ENCODE measurements at regions of chr18 and their contacts with region 1.

Region 1: DNA sequence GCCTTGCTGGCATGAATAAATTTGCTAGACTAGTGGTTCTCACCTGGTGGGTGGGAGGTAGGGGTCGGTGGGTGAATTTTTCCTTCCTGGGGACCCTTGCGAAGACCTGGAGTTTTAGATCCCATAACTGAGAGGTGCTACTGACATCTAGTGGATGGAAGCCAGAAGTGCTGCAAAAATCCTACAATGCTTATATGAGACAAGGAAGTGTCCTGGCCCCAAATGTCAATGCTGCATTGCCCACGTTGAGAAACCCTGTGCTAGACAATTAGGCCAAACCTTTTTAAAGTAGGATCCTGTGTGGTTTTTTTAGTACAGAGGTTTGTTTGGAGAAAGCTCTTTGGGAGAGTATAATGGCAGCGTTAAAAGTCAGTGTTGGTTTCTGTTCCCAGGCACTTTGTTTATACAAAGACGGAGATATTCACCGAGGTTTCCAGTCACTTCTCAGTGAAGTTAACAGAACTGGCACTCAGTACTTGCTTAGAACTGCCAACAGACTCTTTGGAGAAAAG is 9.6 kb downstream of the SERPINB8 start:
- DNase-seq: peak; percentile 36
- H3K4me3 Mint-ChIP-seq: no peak overlapping the region
- H3K27ac Mint-ChIP-seq: no peak overlapping the region
- H3K4me1 Mint-ChIP-seq: peaks cover 21% of the 10 kb centered on the region
- H3K27me3 Mint-ChIP-seq: no peaks in the 10 kb centered on the region

Region 2: DNA sequence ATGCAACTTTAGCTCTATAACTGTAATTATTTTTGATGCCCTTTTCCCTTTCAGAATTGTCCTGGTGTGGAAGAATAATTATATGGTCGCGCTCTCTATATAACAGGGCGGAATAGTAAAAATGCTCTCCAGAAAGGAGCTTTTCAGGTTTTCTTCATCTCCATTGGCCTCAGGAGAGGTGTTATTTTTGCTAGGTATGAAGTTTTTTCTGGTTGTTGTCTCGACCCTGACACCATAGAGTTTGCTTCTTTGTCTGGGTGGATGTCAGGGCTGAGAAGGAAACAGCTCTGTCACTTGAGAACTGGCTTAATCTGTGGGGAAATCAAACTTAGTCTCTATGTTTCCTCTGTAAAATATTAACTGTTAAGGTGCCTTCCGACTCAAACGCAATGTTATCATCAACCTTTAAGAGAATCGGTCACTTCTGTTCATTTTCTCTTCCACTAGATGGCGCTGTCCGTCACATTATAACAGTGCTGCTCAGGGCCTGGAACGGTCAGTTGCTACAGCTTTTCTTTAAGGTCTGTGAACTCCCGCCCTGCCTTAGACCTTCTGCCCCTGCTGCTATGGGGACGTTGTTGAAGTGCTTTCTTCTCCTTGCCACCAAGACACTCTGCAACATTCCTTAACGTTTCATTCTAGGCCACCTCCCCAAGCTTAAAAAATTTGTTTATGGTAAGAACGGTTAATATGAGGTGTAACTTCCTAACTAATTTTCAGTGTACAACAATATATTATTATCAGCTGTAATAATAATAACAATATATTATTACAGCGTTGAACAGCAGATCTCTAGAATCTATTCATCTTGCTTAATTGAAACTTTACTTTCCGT is 461.1 kb before region 1 on chr18:
- CTCF ChIA-PET with region 1: interaction called, 6 read pairs
- POLR2A ChIA-PET with region 1: no interaction called
- intact Hi-C with region 1: loop called (anchors 1 kb)
- DNase-seq: peak; percentile 62
- H3K4me3 Mint-ChIP-seq: no peak overlapping the region
- H3K27ac Mint-ChIP-seq: no peak overlapping the region
- H3K4me1 Mint-ChIP-seq: no peaks in the 10 kb centered on the region
- H3K27me3 Mint-ChIP-seq: peaks cover 5% of the 10 kb centered on the region

Region 3: DNA sequence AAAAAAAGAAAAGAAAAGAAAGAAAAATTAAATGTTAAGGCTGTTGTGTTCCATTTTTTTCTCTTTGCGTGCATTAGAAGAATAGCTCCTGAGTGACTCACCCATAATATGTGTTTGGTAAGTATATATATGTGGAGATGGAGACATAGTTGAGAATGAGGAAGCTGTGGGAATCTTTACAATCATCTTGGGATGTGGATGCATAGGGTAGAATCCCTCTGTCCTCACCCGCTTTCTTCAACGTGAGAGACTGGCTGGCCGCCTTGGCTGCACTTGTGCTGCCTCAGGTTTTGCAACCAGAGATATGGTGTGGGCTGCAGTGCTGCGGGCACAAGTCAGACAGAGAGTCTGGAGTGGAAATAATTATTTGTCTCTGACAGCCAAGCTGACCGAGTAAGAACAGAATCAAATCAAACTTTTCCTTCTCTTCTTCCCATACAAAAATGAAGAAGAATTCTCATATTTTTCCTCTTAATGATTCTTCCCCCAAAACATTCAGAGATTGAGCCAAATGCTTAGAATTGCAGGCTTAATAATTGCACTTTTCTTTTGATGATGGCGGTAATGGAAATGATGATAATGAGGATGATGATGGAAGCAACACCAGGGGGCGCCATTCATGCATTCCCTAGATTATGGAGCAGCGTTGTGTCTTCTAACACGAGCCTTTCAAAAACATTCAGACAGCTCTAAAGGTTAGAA is 155.8 kb before region 1 on chr18:
- CTCF ChIA-PET with region 1: interaction called, 3 read pairs
- POLR2A ChIA-PET with region 1: no interaction called
- intact Hi-C with region 1: loop called (anchors 1 kb)
- DNase-seq: peak; percentile 53
- H3K4me3 Mint-ChIP-seq: no peak overlapping the region
- H3K27ac Mint-ChIP-seq: no peak overlapping the region
- H3K4me1 Mint-ChIP-seq: no peaks in the 10 kb centered on the region
- H3K27me3 Mint-ChIP-seq: peaks cover 3% of the 10 kb centered on the region

Region 4: GRCh38 chr18:63890950-63891304 is 88.5 kb before region 1 on chr18:
- CTCF ChIA-PET with region 1: no interaction called
- POLR2A ChIA-PET with region 1: no interaction called
- intact Hi-C with region 1: loop called (anchors 1 kb)
- DNase-seq: no peak
- H3K4me3 Mint-ChIP-seq: no peak overlapping the region
- H3K27ac Mint-ChIP-seq: no peak overlapping the region
- H3K4me1 Mint-ChIP-seq: peaks cover 6% of the 10 kb centered on the region
- H3K27me3 Mint-ChIP-seq: peaks cover 14% of the 10 kb centered on the region

Region 5: DNA sequence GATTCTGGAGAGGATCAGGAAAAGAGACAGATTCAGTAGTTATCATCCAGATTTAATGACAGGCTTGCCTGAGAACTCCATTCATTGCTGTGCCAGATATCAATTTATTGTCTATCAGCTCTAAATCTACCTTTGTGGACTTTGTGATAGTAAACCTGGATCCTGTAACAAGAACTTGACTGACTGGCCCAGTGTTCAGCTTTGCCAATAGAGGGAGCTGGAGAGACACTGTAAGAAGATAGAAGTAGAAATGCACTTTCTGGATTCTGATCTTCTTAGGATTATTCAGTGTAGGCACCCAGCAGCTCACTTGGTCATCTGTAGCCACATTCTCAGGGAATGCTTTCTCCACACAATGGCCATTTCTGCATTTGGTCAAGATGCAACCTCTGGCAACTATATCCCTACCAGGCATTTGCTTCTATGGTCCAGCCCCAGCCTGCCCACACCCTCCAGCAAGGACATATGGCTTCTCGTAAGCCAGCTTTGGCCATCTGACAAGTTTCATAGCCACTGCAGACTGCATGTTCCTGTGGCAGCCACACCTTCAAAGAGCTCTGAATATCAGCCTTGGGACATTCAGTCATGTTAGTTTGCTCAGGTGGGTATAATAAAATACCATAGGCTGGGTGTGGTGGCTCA is 15.7 kb before region 1 on chr18:
- CTCF ChIA-PET with region 1: interaction called, 48 read pairs
- POLR2A ChIA-PET with region 1: no interaction called
- intact Hi-C with region 1: loop called (anchors 1 kb)
- DNase-seq: peak; percentile 61
- H3K4me3 Mint-ChIP-seq: no peak overlapping the region
- H3K27ac Mint-ChIP-seq: no peak overlapping the region
- H3K4me1 Mint-ChIP-seq: peaks cover 14% of the 10 kb centered on the region
- H3K27me3 Mint-ChIP-seq: peaks cover 13% of the 10 kb centered on the region

Region 6: GRCh38 chr18:63994783-63995399 is 15.4 kb after region 1 on chr18:
- CTCF ChIA-PET with region 1: interaction called, 26 read pairs
- POLR2A ChIA-PET with region 1: interaction called, 4 read pairs
- intact Hi-C with region 1: loop called (anchors 2 kb)
- DNase-seq: peak; percentile 56
- H3K4me3 Mint-ChIP-seq: no peak overlapping the region
- H3K27ac Mint-ChIP-seq: no peak overlapping the region
- H3K4me1 Mint-ChIP-seq: peaks cover 7% of the 10 kb centered on the region
- H3K27me3 Mint-ChIP-seq: no peaks in the 10 kb centered on the region

Region 7: GRCh38 chr18:64037812-64038414 is 58.4 kb after region 1 on chr18:
- CTCF ChIA-PET with region 1: no interaction called
- POLR2A ChIA-PET with region 1: no interaction called
- intact Hi-C with region 1: no loop called
- DNase-seq: no peak
- H3K4me3 Mint-ChIP-seq: no peak overlapping the region
- H3K27ac Mint-ChIP-seq: no peak overlapping the region
- H3K4me1 Mint-ChIP-seq: no peaks in the 10 kb centered on the region
- H3K27me3 Mint-ChIP-seq: peaks cover 5% of the 10 kb centered on the region

Region 8: GRCh38 chr18:64513401-64513800 is 533.9 kb after region 1 on chr18:
- CTCF ChIA-PET with region 1: no interaction called
- POLR2A ChIA-PET with region 1: no interaction called
- intact Hi-C with region 1: no loop called
- DNase-seq: no peak
- H3K4me3 Mint-ChIP-seq: no peak overlapping the region
- H3K27ac Mint-ChIP-seq: no peak overlapping the region
- H3K4me1 Mint-ChIP-seq: no peaks in the 10 kb centered on the region
- H3K27me3 Mint-ChIP-seq: no peaks in the 10 kb centered on the region

Measured in activated CD4-positive, alpha-beta memory T cell treated with anti-CD3 and anti-CD28 coated beads for 36 hours (primary cell).